Right ventricle myocardium superior (tissue), 1 donor: ENCODE measurements at regions of chr7 and their contacts with region 1.

Region 1: DNA sequence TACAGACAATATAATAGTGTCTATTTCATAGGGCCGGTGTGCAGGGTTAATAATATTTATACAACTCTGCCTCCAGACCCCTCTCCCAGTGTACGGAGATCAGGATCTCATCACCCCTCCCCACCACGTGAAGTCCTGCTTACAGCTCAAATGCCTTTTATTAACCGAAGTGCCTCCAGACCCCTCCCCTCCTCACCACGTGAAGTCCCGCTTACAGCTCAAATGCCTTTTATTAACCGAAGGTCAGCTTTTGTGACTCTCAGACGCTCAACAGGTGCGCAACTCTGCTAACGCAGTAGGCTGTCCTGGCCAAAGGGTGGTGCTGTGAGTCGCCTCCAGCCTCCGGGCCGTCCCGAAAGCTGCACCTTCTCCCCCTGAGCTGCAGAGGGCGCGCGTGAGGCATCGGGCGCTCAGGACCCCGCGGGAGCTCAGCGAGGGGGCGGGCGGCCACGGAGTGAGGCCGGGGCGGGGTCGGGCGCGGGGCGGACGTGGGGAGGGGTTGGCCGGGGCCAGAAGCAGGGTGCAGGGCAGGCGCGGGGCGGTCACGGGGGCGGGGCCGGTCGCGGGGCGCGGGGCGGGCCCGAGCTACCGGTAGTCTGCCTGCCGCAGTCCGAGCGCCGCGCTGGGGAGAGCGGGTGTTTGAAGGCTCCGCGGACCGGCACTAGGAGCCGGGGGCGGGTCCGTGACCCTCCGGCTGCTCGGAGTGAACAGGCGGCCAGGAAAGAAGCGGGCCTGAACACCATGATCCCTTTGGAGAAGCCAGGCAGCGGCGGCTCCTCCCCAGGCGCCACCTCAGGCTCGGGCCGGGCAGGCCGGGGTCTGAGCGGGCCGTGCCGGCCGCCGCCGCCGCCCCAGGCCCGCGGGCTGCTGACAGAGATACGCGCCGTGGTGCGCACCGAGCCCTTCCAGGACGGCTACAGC is at the start of gene STK17A:
- DNase-seq: peak; percentile 94
- ATAC-seq: peak; percentile 97
- total RNA-seq, gene STK17A: 23.8 TPM

Region 2: GRCh38 chr7:43658718-43659548 is 76.2 kb after region 1 on chr7:
- intact Hi-C with region 1: no loop called
- DNase-seq: no peak
- ATAC-seq: no peak

Region 3: DNA sequence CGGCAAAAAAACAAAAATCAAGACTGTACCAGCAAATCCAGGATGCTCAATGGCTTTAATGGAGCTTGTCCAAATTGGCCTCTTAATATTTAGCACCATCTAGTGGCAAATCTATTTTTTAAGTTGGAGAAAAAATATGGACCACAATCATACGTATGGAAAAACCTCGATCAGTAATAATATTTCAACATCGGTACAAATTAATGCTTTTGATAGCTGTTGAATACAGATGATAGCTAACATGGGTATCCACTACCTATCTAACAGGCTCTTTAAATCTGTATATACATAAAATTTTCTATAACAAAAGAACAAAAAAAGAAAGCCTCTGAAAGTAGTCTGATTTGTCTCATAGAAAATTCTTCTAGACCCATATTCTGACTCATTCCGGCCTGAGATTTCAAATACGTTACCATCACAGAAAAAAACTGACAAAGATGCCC is 117.3 kb after region 1 on chr7:
- intact Hi-C with region 1: loop called (anchors 1 kb)
- DNase-seq: no peak
- ATAC-seq: peak; percentile 81

Region 4: DNA sequence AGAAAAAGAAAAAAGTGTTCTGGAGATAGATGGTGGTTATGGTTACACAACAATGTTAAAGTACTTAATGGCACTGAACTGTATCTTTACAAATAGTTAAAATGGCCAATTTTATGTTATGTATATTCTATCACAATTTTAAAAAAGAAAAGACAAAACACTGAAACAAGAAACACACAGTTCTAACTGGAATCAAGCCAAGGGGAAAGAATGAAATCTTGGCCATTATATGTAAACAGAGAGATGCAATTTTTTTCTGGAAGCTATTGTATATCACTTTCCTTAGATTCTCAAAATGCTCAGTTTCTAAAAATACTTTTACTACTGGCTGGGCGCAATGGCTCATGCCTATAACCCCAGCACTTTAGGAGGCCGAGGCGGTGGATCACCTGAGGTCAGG is 142.5 kb after region 1 on chr7:
- intact Hi-C with region 1: loop called (anchors 2 kb)
- DNase-seq: no peak
- ATAC-seq: no peak

Region 5: DNA sequence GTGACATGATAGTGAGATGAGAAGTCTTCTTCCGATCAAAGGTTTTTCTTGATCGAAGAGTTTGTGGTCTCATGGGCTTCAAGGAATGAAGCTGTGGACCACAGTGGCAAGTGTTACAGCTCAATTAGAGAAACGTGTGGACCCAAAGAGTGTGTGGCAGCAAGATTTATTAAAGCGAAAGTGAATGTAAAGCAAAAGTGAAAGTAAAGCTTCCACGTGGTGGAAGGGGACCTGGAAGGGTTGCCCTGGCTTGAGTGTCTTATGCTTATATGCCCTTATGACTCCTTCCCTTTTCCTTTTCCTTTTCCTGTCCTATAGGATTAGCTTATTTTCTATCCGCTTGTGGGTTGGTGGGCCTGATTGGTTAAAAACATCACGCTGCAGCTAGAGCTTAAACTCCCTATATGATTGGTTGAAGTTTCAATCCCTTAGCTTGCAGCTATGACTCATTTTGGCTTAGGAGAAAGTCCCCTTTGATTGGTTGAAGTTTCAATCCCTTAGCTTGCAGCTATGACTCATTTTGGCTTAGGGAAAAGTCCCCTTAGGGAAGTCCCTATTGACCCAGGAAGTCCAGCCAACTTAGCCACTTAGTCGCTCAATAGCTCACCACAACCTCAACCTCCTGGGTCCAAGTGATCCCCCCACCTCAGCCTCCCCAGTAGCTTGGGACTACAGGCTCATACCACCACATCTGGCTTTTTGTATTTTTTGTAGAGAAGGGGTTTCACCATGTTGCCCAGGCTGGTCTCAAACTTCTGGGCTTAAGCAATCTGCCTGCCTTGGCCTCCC is 251.9 kb after region 1 on chr7:
- intact Hi-C with region 1: loop called (anchors 10 kb)
- DNase-seq: no peak
- ATAC-seq: no peak